ENCODE measurements at regions of chr1 and their contacts with region 1.

Region 1: GRCh38 chr1:26336477-26337205 is 17.3 kb downstream of the CRYBG2 start:
- DNase-seq: peak; percentile 90
- H3K4me3 ChIP-seq: peak overlapping the region; percentile 65 to 83 (median 79)
- H3K27ac ChIP-seq: no peak overlapping the region
- H3K4me1 ChIP-seq: peaks cover 12% of the 10 kb centered on the region
- H3K27me3 ChIP-seq: no peaks in the 10 kb centered on the region
- CTCF ChIP-seq: no peak

Region 2: DNA sequence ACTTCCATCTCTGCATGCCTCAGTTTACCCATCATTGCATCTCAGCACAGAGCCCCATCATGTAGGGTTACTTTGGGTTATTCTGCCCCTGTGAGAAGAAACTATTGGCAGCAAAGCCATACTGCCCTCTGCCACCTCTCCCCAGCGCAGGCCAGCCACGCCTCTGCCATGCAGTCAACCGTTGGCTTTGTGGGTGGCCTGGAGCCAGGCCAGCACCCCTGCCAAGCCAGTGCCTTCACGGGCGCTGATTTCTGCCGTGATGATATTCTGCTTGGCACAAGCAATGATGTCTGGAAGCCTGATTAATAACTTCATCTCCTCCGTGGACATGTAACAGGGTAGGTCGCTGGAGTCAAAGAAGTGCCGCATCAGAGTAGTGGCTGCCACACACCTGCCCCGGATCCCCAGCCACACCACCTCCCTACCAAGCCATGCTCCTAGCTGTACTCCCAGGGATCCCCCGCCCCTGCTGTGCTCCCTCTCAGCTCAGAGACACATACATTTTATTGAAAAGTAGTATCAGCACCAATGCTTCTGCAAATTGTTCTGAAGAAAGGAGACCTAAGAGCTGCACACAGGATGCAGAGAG is 117.6 kb before region 1 on chr1:
- CTCF ChIA-PET with region 1: no interaction called
- dilution Hi-C with region 1: no loop called
- in situ Hi-C with region 1: no loop called
- intact Hi-C with region 1: no loop called
- DNase-seq: no peak
- H3K4me3 ChIP-seq: no peak overlapping the region
- H3K27ac ChIP-seq: no peak overlapping the region
- H3K4me1 ChIP-seq: no peaks in the 10 kb centered on the region
- H3K27me3 ChIP-seq: no peaks in the 10 kb centered on the region
- CTCF ChIP-seq: no peak

Region 3: DNA sequence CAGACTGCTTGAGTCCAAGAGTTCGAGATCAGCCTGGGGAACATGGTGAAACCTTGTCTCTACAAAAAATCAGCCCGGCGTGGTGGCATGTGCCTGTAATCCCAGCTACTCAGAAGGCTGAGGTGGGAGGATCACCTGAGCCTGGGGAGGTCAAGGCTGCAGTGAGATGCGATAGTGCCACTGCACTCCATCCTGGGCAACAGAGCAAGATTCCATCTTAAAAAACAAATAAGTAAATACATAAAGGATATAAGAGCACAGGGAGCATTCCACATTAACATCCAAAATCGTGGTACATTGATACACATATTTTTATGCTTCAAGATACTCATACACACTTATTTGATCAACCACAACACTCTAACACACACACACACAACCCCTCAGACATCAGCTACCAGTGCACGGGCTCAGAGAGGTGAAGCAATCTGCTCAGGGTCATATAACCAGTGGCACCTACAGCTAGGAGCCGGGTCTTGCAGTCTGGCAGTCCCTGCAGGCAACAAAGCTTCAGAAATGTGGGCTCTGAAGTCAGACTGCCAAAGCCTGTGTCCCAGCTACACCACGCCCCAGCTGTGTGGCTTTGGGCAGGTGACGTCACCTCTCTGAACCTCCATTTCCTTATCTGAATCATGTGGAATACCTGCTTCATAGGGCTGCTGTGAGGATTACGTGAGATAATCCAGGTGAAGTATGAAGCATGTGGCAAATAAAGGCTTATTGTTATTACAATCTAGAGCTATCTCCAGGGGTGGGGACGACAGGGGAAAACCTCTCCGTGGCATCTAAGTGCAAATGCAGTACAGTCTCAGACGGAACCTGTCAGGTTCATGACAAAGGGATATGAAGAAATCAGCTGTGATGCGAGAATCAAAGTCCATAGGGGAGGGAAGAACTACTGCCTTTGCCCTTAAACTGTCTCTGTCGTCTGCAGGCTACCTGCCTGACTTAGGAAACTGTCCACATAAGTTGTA is 22.1 kb after region 1 on chr1:
- CTCF ChIA-PET with region 1: no interaction called
- dilution Hi-C with region 1: no loop called
- in situ Hi-C with region 1: no loop called
- intact Hi-C with region 1: loop called (anchors 1 kb)
- DNase-seq: peak; percentile 93
- H3K4me3 ChIP-seq: no peak overlapping the region
- H3K27ac ChIP-seq: no peak overlapping the region
- H3K4me1 ChIP-seq: peaks cover 42% of the 10 kb centered on the region
- H3K27me3 ChIP-seq: no peaks in the 10 kb centered on the region
- CTCF ChIP-seq: no peak

Region 4: GRCh38 chr1:26417111-26417759 is 80.6 kb after region 1 on chr1:
- CTCF ChIA-PET with region 1: no interaction called
- dilution Hi-C with region 1: no loop called
- in situ Hi-C with region 1: no loop called
- intact Hi-C with region 1: loop called (anchors 5 kb)
- DNase-seq: peak; percentile 66
- H3K4me3 ChIP-seq: no peak overlapping the region
- H3K27ac ChIP-seq: no peak overlapping the region
- H3K4me1 ChIP-seq: no peaks in the 10 kb centered on the region
- H3K27me3 ChIP-seq: peaks cover 21% of the 10 kb centered on the region
- CTCF ChIP-seq: peak; percentile 86 to 96

Region 5: GRCh38 chr1:27253596-27253995 is 917.0 kb after region 1 on chr1:
- CTCF ChIA-PET with region 1: no interaction called
- dilution Hi-C with region 1: no loop called
- in situ Hi-C with region 1: no loop called
- intact Hi-C with region 1: no loop called
- DNase-seq: no peak
- H3K4me3 ChIP-seq: no peak overlapping the region
- H3K27ac ChIP-seq: no peak overlapping the region
- H3K4me1 ChIP-seq: no peaks in the 10 kb centered on the region
- H3K27me3 ChIP-seq: no peaks in the 10 kb centered on the region
- CTCF ChIP-seq: no peak